IMR-90 (cell line): ENCODE measurements at regions of chr1 and their contacts with region 1.

Region 1: DNA sequence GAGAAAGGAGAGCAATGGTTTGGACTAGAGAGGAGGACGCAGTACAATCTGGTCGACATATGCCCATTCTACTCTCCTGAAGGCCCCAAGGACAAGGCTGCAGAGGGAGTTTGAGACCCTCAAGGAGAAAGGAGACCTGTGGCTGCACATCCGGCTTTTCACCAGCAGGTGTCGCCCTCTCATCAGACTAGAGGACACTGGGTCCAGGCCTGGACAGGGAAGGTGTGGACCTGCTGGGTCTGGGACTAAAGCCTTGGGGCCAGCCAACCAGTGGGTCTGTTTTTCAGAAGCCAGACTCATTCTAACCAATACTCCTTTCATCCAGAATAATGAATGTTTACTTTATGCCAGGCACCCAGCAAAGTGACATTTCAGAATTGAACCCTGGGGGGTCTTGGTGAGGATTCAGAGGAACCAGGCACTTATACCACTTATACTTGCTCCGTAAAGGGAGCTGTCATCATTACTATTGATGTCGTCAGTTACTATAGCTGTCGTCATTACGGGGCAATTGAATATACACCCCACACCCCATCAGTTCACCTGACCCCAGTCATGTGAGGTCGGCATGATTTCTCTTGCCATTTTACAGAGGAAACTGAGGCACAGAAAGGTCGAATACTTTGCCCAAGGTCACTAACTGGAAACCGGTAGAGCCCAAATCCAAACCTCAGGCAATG is 5.1 kb downstream of the SRARP start:
- DNase-seq: peak; percentile 67
- ATAC-seq: peak; percentile 79
- H3K4me3 ChIP-seq: no peak overlapping the region
- H3K27ac ChIP-seq: no peak overlapping the region
- H3K4me1 ChIP-seq: peaks cover 9% of the 10 kb centered on the region
- H3K27me3 ChIP-seq: peaks cover 2% of the 10 kb centered on the region; the same call in 1 of the 2 replicates
- CTCF ChIP-seq: peak; percentile 97
- POLR2A ChIP-seq: 0 out of 2 replicates have a peak, but pooled peaks have one; percentile 23
- RAD21 ChIP-seq: peak; percentile 98

Region 2: GRCh38 chr1:15799004-15799936 is 209.9 kb before region 1 on chr1:
- CTCF ChIA-PET with region 1: no interaction called
- POLR2A ChIA-PET with region 1: no interaction called
- dilution Hi-C with region 1: no loop called
- in situ Hi-C with region 1: no loop called
- intact Hi-C with region 1: loop called (anchors 5 kb)
- DNase-seq: peak; percentile 96
- ATAC-seq: peak; percentile 86
- H3K4me3 ChIP-seq: no peak overlapping the region
- H3K27ac ChIP-seq: peak overlapping the region; percentile 81
- H3K4me1 ChIP-seq: peaks cover 43% of the 10 kb centered on the region
- H3K27me3 ChIP-seq: no peaks in the 10 kb centered on the region
- CTCF ChIP-seq: no peak
- POLR2A ChIP-seq: no peak
- RAD21 ChIP-seq: no peak

Region 3: GRCh38 chr1:16032388-16033103 is 23.4 kb after region 1 on chr1:
- CTCF ChIA-PET with region 1: no interaction called
- POLR2A ChIA-PET with region 1: no interaction called
- dilution Hi-C with region 1: no loop called
- in situ Hi-C with region 1: no loop called
- intact Hi-C with region 1: loop called (anchors 2 kb)
- DNase-seq: peak; percentile 79
- ATAC-seq: peak; percentile 100
- H3K4me3 ChIP-seq: no peak overlapping the region
- H3K27ac ChIP-seq: no peak overlapping the region
- H3K4me1 ChIP-seq: no peaks in the 10 kb centered on the region
- H3K27me3 ChIP-seq: peaks cover 9% of the 10 kb centered on the region
- CTCF ChIP-seq: peak; percentile 98
- POLR2A ChIP-seq: 0 out of 2 replicates have a peak, but pooled peaks have one; percentile 26
- RAD21 ChIP-seq: peak; percentile 97

Region 4: GRCh38 chr1:16055613-16056520 is 46.7 kb after region 1 on chr1:
- CTCF ChIA-PET with region 1: interaction called, 4 read pairs
- POLR2A ChIA-PET with region 1: no interaction called
- dilution Hi-C with region 1: no loop called
- in situ Hi-C with region 1: no loop called
- intact Hi-C with region 1: loop called (anchors 1 kb)
- DNase-seq: peak; percentile 64
- ATAC-seq: peak; percentile 99
- H3K4me3 ChIP-seq: no peak overlapping the region
- H3K27ac ChIP-seq: no peak overlapping the region
- H3K4me1 ChIP-seq: no peaks in the 10 kb centered on the region
- H3K27me3 ChIP-seq: peaks cover 22% of the 10 kb centered on the region
- CTCF ChIP-seq: peak; percentile 88
- POLR2A ChIP-seq: no peak
- RAD21 ChIP-seq: peak; percentile 89